Lower leg skin (tissue), 4 donors: ENCODE measurements at regions of chr12 and their contacts with region 1.

Region 1: GRCh38 chr12:7092229-7092985 is at the start of gene C1R:
- DNase-seq: peak; percentile 76 to 94
- H3K4me3 ChIP-seq: peak within 1 kb of the TSS; percentile 29
- CTCF ChIP-seq: peak in 1 of 3 donors; percentile 40
- POLR2A ChIP-seq: no peak
- total RNA-seq, gene C1R: 65.0 to 259 (median 84.7) TPM

Region 2: DNA sequence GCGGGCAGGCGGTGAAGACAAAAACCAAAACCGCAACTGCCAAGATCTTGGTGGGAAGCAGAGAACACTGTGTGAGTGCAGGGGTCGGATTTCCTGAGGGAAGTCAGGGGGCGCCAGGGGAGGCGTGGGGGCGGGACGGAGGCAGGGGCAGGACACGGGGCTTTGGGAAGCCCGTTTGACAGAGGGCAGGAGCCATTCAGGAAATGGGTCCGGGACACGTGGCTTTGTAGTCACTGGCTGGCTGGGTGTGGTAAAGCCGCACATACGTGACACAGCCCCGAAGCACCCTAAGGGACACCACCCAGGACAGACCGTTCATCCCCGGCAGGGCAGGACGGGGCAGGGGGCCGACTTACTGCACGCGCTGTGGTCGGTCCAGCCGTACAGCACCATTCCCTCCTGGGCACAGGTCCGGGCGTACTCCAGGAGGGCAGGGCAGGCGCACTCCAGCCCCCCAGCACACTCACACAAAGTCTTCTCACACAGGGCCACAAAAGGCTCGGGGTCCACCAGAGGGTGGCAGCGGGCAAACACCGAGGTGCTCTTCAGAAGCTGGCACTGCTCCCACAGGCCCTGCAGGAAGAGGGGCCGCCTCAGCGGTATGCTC is 1017.3 kb before region 1 on chr12:
- intact Hi-C with region 1: no loop called
- DNase-seq: no peak
- H3K4me3 ChIP-seq: no peak overlapping the region
- CTCF ChIP-seq: no peak
- POLR2A ChIP-seq: no peak

Region 3: DNA sequence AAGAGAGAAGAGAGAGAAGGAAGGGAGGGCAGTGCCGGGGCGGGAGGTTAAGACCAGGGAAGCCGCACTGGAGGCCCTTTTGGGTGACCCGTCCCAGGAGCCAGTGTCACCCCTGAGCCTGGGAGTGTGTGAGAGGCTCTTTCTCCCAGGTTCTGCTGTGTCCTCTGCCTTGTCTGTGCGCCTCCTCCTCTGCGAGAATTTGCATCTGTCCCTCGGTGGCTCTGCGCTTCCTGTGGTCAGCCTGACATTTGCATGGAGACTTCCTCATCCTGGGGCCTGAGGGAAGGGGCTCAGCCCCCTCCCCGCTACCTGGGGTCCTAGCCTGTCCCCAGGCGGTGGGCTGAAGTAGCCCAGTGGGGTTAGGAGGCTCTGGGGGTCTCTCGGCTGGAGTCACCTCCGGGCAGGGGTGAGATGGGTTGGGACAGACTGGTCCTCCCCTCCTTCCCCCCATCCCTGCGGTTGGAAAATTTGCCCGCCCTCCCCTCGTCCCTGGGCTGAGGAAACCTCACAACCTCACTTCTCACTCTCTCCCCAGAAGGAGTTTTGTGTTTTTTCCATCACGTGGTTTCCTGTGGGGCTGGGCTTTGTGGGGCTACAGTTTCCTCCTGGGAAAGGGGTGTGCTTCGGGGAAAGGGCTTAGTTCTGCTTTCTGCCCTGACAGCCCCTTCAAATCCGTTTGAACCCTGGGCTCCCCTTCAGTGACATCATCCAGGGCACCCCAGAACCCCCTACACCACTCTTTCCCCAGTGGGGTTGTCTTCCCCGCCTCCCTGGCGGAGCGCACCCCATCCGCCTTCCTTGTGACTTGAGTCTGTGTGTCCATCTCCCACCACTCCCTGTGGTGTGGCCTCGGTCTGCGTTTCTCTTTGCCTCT is 138.7 kb before region 1 on chr12:
- intact Hi-C with region 1: loop called (anchors 10 kb)
- DNase-seq: no peak
- H3K4me3 ChIP-seq: no peak overlapping the region
- CTCF ChIP-seq: no peak
- POLR2A ChIP-seq: no peak